OCI-LY7 (cell line): ENCODE measurements at regions of chr22 and their contacts with region 1.

Region 1: DNA sequence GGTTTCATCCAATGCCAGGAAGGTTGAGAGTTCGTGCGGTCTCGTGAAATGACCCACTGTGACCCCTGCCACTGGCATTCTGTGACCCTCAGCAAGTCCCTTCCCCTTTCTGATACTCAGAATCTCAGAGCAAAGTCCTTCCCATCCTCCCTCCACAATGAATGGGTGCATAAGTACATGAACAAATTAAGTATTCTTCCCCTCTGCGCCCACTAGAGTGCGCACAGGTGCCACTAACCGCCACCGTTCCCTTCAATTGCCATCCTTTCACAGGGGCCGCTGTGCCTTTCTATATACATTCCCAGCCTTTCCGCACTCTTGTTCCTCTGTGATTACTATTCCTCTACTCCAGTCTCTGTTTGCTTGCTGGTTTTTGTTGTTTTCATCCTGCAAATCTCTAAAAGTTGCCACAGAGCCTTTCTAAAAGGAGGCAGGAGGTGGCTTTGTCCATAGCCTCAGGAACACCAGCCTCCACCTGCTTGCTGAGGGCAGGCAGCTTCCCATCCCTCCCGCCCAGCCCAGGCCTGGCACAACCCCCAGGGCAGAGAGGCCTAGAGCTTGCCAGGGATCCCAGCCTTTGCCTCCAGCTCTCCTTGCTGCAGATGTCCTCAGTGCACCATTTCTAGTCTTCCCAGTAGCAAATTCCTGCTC is 6.7 kb upstream of the AP1B1 start:
- DNase-seq: peak; percentile 82
- H3K4me3 ChIP-seq: no peak overlapping the region
- H3K27ac ChIP-seq: no peak overlapping the region
- H3K4me1 ChIP-seq: peaks cover 36% of the 10 kb centered on the region
- CTCF ChIP-seq: peak; percentile 95

Region 2: GRCh38 chr22:29359469-29359868 is 35.6 kb before region 1 on chr22:
- CTCF ChIA-PET with region 1: no interaction called
- POLR2A ChIA-PET with region 1: no interaction called
- intact Hi-C with region 1: no loop called
- DNase-seq: peak; percentile 37
- H3K4me3 ChIP-seq: no peak overlapping the region
- H3K27ac ChIP-seq: no peak overlapping the region
- H3K4me1 ChIP-seq: peaks cover 18% of the 10 kb centered on the region
- CTCF ChIP-seq: peak; percentile 71

Region 3: DNA sequence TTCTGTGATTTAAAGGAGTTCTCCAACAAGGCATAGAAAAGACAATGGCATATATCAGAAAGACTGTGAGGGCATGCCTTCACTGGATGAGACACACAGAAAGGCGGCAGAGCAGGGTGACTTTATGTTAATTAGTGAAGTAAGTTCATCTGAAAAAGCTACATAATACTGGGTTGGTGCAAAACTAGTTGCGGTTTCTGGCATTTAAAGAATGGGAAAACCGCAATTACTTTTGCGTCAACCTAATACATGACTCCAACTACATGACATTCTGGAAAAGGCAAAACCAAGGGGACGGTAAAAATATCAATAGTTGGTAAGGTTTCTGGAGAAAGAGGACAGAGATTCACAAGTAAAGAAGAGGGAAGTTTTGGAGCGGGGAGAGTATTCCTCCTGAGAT is 48.4 kb after region 1 on chr22:
- CTCF ChIA-PET with region 1: interaction called, 13 read pairs
- POLR2A ChIA-PET with region 1: no interaction called
- intact Hi-C with region 1: no loop called
- DNase-seq: no peak
- H3K4me3 ChIP-seq: no peak overlapping the region
- H3K27ac ChIP-seq: no peak overlapping the region
- H3K4me1 ChIP-seq: no peaks in the 10 kb centered on the region
- CTCF ChIP-seq: no peak

Region 4: DNA sequence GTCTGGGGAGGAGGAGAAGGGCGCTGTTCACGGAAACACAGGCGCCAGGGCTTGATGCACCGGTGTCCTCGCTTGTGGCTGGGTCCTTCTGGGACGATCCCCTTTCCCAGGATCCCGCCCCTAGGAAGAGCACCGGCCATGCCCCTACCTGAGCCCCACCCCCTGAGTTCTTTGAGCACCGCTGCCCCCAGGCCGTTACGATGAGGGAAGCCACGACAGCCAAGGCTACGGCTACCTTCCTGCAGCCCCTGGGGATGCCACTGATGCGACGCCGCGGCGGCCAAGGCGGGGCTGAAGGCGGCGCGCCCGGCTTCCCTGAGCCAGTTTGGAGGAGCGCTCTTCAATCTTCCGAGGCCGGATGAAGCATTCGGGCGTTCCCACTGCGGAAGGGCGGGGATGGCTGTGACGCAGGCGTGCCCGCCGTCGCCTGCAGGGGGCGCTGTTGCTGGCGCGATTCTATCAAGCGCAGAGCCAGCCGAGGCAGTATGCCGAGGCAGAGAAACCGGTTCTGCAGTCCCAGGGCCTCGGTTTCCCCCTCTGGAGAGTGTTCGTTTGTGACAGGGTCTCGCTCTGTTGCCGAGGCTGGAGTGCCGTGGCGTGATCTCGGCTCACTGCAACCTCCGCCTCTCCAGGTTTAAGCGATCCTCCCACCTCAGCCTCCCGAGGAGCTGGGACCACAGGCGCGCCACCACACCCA is 75.3 kb after region 1 on chr22:
- CTCF ChIA-PET with region 1: no interaction called
- POLR2A ChIA-PET with region 1: no interaction called
- intact Hi-C with region 1: loop called (anchors 5 kb)
- DNase-seq: peak; percentile 81
- H3K4me3 ChIP-seq: peak overlapping the region; percentile 59
- H3K27ac ChIP-seq: no peak overlapping the region
- H3K4me1 ChIP-seq: peaks cover 8% of the 10 kb centered on the region
- CTCF ChIP-seq: peak; percentile 94

Region 5: GRCh38 chr22:29524440-29525191 is 129.6 kb after region 1 on chr22:
- CTCF ChIA-PET with region 1: no interaction called
- POLR2A ChIA-PET with region 1: no interaction called
- intact Hi-C with region 1: loop called (anchors 1 kb)
- DNase-seq: peak; percentile 60
- H3K4me3 ChIP-seq: no peak overlapping the region
- H3K27ac ChIP-seq: no peak overlapping the region
- H3K4me1 ChIP-seq: peaks cover 3% of the 10 kb centered on the region
- CTCF ChIP-seq: peak; percentile 77